ENCODE measurements at regions of chr19 and their contacts with region 1.

Region 1: GRCh38 chr19:50368649-50369570 is 3.5 kb upstream of the NAPSA start:
- DNase-seq: peak; percentile 80 to 93 (median 92)
- ATAC-seq: peak; percentile 96
- H3K4me3 ChIP-seq: peak overlapping the region; percentile 28
- H3K4me1 ChIP-seq: no peaks in the 10 kb centered on the region
- CTCF ChIP-seq: peak; percentile 77

Region 2: GRCh38 chr19:50414864-50415660 is 46.2 kb after region 1 on chr19:
- intact Hi-C with region 1: loop called in 1 of 2 experiments (anchors 10 kb)
- DNase-seq: peak; percentile 87 to 88 (median 87)
- ATAC-seq: peak; percentile 67
- H3K4me3 ChIP-seq: no peak overlapping the region
- H3K4me1 ChIP-seq: peaks cover 22% of the 10 kb centered on the region
- CTCF ChIP-seq: peak; percentile 82

Region 3: DNA sequence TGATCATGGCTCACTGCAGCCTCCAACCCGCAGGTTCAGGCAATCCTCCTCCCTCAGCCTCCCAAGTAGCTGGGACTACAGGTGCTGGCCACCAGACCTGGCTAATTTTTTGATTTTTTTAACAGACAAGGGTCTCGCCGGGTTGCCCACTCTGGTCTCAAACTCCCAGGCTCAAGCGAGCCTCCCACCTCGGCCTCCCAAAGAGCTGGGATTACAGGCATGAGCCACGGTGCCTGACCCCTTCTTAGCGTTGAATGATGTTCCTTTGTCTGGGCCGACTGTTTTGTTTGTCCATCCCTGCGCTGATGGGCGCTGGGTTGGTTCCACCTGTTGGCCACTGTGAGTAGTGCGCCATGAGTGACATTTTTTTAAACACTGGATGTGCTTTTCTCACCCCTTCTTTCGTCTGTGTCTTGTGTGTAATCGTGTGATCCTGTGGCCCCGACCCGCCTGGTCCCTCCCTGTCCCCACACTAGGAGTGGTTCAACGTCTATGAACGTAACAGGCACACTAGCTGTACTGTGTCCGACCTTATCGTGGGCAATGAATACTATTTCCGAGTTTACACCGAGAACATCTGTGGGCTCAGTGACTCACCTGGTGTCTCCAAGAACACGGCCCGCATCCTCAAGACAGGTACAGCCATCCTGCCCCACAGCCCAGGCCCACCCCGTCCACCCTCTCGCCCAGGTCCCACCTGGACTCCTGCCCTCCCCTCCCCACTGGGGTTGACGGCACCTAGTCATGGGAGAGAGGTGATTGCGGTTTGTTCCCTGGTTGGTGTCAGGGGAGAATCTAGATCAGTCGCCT is 92.4 kb after region 1 on chr19:
- intact Hi-C with region 1: loop called (anchors 5 to 10 kb)
- DNase-seq: peak in 2 of 3 donors; percentile 70 to 76
- ATAC-seq: peak; percentile 85
- H3K4me3 ChIP-seq: no peak overlapping the region
- H3K4me1 ChIP-seq: no peaks in the 10 kb centered on the region
- CTCF ChIP-seq: peak; percentile 75

Region 4: DNA sequence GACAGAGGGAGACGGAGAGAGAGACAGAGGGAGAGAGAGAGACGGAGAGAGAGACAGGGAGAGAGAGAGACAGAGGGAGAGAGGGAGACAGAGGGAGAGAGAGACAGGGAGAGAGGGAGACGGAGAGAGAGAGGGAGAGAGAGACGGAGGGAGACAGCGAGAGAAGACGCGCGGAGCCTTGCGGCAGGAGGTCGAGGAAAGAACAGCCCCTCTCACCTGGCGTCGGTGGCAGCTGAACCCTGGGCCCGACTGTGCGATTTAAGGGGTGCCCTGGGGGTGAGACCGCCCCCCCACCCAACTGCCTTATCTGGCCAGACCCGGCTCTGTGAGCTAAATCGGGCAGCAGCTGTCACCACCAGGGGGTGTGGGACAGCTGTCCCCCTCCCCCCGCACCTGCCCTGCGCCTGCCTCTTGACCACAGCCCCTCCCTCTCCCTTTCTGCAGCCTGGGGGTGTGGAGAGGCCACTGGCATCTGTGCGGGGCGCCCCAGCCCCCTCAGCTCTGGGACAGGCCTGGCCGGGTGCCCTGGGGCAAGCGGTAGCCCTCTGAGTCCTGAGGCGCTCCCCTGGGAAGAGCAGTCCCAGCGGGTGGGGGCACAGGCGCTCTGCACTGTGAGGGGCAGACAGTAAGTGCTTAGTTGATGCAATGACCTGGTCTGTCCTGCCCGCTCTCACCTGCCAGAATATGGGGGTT is 131.3 kb after region 1 on chr19:
- intact Hi-C with region 1: no loop called
- DNase-seq: peak in 1 of 3 donors; percentile 48
- ATAC-seq: peak; percentile 34
- H3K4me3 ChIP-seq: no peak overlapping the region
- H3K4me1 ChIP-seq: no peaks in the 10 kb centered on the region
- CTCF ChIP-seq: no peak